ENCODE measurements at regions of chr2 and their contacts with region 1.

Region 1: GRCh38 chr2:23312996-23313606 is 71.9 kb upstream of the KLHL29 start:
- DNase-seq: peak; percentile 66
- H3K4me3 ChIP-seq: no peak overlapping the region; a peak in 1 of 4 replicates
- H3K27ac ChIP-seq: no peak overlapping the region
- H3K4me1 ChIP-seq: no peaks in the 10 kb centered on the region
- H3K27me3 ChIP-seq: peaks cover 5% of the 10 kb centered on the region; the same call in 1 of the 2 replicates
- CTCF ChIP-seq: peak; percentile 75
- EP300 ChIP-seq: no peak
- RAD21 ChIP-seq: peak; percentile 58

Region 2: DNA sequence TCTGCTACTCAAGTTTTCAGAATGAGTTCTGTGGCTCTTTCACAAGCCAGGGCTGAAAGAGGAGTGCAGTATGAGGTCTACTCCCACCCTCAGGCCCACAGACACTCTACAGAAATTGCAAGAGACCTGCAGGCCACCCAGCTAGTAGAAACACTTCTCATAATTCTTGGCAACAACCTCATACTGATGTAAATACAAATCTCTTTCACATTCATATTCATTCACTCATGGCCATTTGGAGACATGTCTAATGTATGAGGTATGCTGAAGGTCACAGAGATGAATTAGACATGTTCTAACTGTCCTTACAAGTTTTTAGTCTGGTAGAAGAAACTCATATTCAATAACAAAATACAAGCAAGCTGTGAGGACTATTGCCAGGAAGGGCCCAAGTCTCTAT is 12.0 kb before region 1 on chr2:
- CTCF ChIA-PET with region 1: interaction called, 10 read pairs
- POLR2A ChIA-PET with region 1: no interaction called
- DNase-seq: no peak
- H3K4me3 ChIP-seq: no peak overlapping the region
- H3K27ac ChIP-seq: no peak overlapping the region
- H3K4me1 ChIP-seq: no peaks in the 10 kb centered on the region; a peak in 1 of 4 replicates
- H3K27me3 ChIP-seq: no peaks in the 10 kb centered on the region; the same call in 1 of the 2 replicates
- CTCF ChIP-seq: no peak
- EP300 ChIP-seq: no peak
- RAD21 ChIP-seq: no peak